Adrenal gland (tissue), 19 donors: ENCODE measurements at regions of chr9 and their contacts with region 1.

Region 1: DNA sequence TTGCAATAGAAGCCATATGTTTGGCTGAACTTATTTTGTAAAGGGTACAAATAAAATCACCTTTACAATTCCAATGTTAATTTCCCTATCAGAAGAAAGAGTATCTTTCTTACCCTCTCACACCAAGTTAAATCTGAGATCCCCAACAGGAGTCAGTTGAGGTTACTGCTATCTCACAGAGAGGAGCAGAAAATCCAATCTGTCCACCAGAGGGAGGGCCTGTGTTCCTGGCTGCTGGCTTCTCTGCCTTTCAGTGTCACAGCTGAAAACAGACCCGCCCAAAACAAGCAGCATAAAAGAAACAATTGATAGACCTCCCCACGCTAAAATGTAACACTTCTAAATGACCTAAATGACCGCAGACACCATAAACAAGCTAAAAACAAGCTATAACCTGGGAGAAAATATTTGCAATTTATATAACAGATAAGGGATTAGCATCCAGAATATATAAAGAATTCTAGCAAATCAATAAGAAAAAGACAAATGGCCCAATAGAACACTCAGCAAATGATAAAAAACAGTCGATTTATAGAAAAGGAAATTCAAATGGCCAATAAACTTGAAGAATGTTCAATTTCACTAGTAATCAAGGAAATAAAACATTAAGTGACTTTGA is 24.5 kb upstream of the MVB12B start:
- DNase-seq: peak; percentile 30 to 90 (median 69)
- H3K4me3 ChIP-seq: no peak overlapping the region
- H3K27ac ChIP-seq: no peak overlapping the region
- H3K4me1 ChIP-seq: no peaks in the 10 kb centered on the region
- H3K27me3 ChIP-seq: no peaks in the 10 kb centered on the region
- CTCF ChIP-seq: peak; percentile 51 to 79 (median 73)
- POLR2A ChIP-seq: no peak

Region 2: GRCh38 chr9:126108240-126108639 is 193.9 kb before region 1 on chr9:
- intact Hi-C with region 1: no loop called
- DNase-seq: peak in 1 of 7 donors; percentile 4
- H3K4me3 ChIP-seq: no peak overlapping the region
- H3K27ac ChIP-seq: no peak overlapping the region
- H3K4me1 ChIP-seq: no peaks in the 10 kb centered on the region
- H3K27me3 ChIP-seq: peaks cover 10% of the 10 kb centered on the region
- CTCF ChIP-seq: no peak
- POLR2A ChIP-seq: no peak

Region 3: DNA sequence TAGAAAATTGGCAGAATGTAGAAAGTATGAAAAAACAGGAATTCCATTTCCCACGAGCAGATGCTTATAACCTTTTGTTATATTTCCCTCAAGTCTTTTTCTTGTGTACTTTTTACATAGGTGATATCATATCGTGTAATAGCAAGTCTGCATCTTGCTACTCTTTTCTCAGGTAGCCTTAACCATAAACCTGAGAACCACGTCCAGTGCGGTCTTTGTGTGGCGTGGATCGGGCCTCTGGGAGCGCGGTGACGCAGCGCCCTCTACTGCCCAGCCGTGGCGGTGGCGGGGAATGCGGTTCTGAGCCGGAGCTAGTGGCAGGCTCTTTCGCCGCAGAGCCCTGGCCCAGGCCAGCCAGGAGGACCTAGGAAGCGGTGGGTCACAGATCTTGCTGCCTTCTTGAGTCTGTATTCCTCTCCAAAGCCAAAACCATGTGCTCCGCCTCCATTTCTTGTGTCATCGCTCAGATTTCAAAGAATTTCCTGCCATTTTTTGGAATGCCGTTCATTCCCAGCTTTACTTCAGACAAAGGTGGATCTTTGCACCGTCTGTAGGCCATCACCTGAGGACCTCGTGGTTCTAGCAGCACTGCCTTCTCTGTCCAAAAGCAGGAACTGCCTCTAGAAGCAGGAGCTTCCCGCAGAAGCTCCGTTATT is 96.4 kb after region 1 on chr9:
- intact Hi-C with region 1: loop called in 1 of 2 experiments (anchors 5 kb)
- DNase-seq: peak; percentile 60 to 92 (median 78)
- H3K4me3 ChIP-seq: no peak overlapping the region
- H3K27ac ChIP-seq: no peak overlapping the region
- H3K4me1 ChIP-seq: peaks cover 0 to 12% of the 10 kb centered on the region in 2 donors
- H3K27me3 ChIP-seq: no peaks in the 10 kb centered on the region
- CTCF ChIP-seq: peak; percentile 91 to 98 (median 96)
- POLR2A ChIP-seq: no peak